HepG2 (cell line): ENCODE measurements at regions of chr4 and their contacts with region 1.

Region 1: GRCh38 chr4:183722731-183723560 is 63.9 kb downstream of the TRAPPC11 start:
- DNase-seq: no peak
- ATAC-seq: peak; percentile 43
- H3K4me3 ChIP-seq: peak overlapping the region in 1 of 3 experiments; percentile 58; a peak in 2 of 6 replicates
- H3K27ac ChIP-seq: peak overlapping the region; percentile 70
- H3K4me1 ChIP-seq: peaks cover 56% of the 10 kb centered on the region
- H3K27me3 ChIP-seq: no peaks in the 10 kb centered on the region
- CTCF ChIP-seq: no peak
- EP300 ChIP-seq: no peak
- POLR2A ChIP-seq: no peak
- RAD21 ChIP-seq: no peak

Region 2: DNA sequence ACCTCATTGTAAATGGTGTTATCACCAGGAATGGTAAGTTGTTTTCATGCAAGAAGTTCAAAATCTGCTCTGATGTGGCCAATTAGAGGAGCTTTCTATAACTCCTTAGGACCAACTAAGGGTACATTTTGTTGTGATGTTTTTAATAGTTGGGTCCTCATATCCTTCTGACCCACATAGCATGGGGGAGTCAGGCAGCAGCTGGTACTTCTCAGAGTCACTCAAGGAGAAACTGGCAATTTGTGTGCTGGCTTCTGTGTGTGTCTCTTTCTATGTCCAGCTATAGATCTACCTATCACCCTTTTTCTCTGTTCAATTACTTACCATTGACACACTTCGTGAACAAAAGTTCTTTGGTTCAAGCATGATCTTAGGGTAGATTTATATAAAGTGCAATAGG is 1674.1 kb before region 1 on chr4:
- CTCF ChIA-PET with region 1: no interaction called
- POLR2A ChIA-PET with region 1: no interaction called
- in situ Hi-C with region 1: no loop called
- intact Hi-C with region 1: no loop called
- DNase-seq: no peak
- ATAC-seq: no peak
- H3K4me3 ChIP-seq: no peak overlapping the region
- H3K27ac ChIP-seq: no peak overlapping the region
- H3K4me1 ChIP-seq: no peaks in the 10 kb centered on the region
- H3K27me3 ChIP-seq: no peaks in the 10 kb centered on the region
- CTCF ChIP-seq: no peak
- EP300 ChIP-seq: no peak
- POLR2A ChIP-seq: no peak
- RAD21 ChIP-seq: no peak

Region 3: DNA sequence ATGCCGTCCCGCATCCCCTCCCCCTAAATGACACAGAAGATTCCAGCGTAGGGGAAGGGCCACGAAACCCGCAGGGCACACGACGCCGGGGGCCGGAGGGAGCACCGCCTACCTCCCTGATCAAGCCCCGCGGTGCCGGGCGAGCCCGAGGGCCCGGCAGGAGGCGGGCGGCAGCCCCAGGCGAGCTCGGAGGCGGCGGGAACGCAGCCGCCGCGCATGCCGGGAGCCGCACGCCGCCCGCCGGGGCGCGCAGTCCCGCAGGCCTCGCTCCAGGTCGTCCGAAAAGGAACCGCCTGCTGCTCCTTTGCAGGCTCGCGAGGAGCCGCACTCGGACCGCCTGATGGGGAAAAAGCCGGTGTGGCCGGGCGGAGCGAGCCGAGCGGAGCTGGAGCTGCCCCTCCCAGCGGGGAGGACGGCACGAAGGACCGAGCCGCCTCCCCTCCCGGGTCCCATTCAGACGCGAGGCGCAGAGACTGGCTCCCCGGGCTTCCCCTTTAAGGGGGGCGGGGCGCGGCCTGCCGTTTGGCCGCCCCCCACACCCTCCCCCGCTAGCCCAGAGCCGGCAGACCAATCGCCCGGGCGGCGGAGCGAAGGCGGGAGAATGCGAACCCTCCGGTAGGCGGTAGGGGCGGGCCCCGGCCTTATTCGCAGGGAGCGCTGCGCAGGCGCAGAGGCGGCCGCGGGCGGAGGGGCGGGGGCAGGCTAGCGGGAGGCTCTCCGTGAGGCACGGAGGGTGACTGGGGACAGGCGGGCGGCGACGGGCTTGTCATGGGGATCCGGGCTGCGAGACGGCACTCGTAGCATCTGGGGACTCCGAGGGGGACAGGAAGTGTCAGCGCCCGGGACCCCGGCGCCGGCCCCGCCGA is 218.6 kb before region 1 on chr4:
- CTCF ChIA-PET with region 1: no interaction called
- POLR2A ChIA-PET with region 1: no interaction called
- in situ Hi-C with region 1: no loop called
- intact Hi-C with region 1: loop called (anchors 2 kb)
- DNase-seq: peak; percentile 93
- ATAC-seq: peak; percentile 82
- H3K4me3 ChIP-seq: peak overlapping the region; percentile 84 to 99 (median 97)
- H3K27ac ChIP-seq: peak overlapping the region; percentile 91
- H3K4me1 ChIP-seq: peaks cover 49% of the 10 kb centered on the region
- H3K27me3 ChIP-seq: no peaks in the 10 kb centered on the region; a peak in 1 of 5 replicates
- CTCF ChIP-seq: peak; percentile 53
- EP300 ChIP-seq: peak; percentile 10 to 12; a peak in 1 of 4 replicates
- POLR2A ChIP-seq: peak; percentile 65 to 77
- RAD21 ChIP-seq: peak; percentile 86